ENCODE measurements at regions of chr19 and their contacts with region 1.

Region 1: DNA sequence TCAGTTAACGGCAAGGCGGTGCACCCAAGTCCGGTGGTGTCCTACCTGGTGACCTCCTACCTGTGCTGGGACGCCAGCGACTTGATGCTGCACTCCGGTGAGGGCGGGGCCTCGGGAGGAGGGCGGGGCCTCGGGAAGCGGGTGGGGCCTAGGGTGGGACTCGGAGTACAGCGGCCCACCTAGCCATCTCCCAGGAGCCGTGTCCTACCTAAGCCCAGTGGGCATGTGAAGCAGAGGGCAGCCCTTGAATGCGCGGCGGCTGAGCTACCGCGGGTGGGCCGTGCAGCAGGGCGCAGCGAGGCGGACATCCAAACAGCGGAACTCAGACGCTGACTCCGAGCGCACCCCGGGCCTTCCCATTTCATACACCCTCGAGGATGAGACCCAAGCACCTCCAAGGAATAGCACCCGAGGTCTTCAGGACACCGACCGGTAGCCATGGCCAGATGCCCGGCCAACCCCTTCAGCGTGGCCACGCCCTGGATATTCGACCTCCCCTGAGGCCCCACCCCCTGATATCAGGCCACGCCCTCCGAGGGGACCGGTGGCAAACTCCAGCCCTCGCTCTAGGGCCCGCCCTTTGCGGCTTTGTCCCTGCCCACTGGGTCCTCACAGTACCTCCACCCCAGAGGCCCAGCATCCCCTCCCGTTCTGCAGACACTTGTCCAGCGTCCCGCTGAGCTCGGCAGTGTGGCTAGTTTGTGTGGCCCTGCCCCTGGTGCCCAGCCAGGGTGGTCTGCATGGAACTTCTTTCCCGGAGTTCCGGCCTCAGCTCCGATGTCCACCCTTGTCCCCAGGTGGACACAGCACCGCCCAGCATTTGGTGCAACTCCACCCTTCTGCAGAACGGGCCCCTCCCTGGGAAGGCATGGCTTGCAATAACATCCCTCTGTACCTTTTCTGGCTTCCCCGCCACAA is 5.4 kb downstream of the KLK1 start:
- DNase-seq: peak; percentile 78
- H3K4me3 Mint-ChIP-seq: peak overlapping the region; percentile 79
- H3K27ac Mint-ChIP-seq: peak overlapping the region; percentile 77
- H3K4me1 Mint-ChIP-seq: peaks cover 41% of the 10 kb centered on the region
- H3K27me3 Mint-ChIP-seq: peaks cover 68% of the 10 kb centered on the region

Region 2: DNA sequence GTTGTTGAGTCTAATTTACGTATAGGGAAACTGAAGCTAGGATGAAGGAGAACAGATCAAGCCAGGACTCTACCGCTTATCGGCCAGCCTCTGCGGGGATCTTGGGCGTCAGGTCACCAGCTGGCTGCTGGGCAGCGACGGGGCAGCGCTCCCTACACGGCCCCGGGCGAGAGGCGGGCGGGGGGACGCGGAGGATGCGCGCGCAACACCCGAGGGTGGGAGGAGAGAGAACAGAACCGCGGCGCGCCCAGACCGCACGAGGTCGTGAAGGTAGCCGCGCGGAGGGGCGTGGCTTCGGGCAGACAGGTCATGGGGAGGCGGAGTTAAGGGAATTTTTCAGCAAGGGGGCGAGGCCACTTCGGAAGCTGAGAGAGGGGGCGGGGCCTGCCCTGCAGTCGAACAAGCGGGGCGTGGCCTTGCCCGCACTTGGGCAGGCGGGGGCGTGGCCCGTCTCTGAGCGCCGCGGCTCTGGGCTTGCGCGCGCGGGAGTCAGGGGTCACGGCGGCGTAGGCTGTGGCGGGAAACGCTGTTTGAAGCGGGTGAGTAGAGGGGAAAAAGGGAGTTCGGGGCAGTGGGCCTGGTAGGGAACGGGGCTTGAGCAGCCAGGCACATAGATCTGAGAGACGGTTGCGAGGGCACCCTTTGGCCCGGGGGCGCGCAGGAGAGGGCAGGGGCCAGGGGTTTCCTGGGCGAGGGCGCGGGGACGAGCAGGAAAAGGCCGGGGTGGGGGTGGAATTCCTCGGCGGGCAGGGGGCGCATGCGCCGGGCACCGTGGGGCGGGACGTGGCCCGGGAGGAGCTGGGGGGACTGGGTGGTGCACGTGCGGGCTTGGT is 434.1 kb before region 1 on chr19 and contains the start of gene POLD1:
- CTCF ChIA-PET with region 1: no interaction called
- POLR2A ChIA-PET with region 1: interaction called, 3 read pairs
- intact Hi-C with region 1: loop called (anchors 5 kb)
- DNase-seq: peak; percentile 99
- H3K4me3 Mint-ChIP-seq: peak within 1 kb of the TSS; percentile 98
- H3K27ac Mint-ChIP-seq: peak within 1 kb of the TSS; percentile 95
- H3K4me1 Mint-ChIP-seq: peaks cover 33% of the 10 kb centered on the region
- H3K27me3 Mint-ChIP-seq: no peaks in the 10 kb centered on the region
- total RNA-seq, gene POLD1: 190 to 191 TPM